ENCODE measurements at regions of chr6 and their contacts with region 1.

Region 1: DNA sequence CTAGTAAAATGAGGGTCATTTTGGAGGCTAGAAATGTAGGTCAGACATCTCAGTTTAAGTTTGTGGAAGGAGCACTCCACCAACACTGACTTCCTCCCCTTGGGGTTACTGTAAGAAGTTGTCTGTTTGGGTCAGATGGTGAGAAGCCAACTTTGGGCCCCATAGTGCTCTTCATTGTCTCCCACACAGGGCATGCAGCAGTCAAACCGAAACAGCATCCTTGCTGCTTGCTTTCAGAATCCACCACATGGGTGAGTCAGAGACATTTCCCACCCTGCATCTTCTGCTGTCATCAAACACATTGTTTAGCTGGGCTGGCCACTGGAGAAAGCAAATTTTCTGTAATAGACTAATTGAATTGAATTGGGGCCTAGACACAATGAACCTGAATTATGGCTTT is 16.8 kb downstream of the IL17F start:
- DNase-seq: peak; percentile 91
- H3K4me3 Mint-ChIP-seq: no peak overlapping the region
- H3K27ac Mint-ChIP-seq: no peak overlapping the region
- H3K4me1 Mint-ChIP-seq: peaks cover 18% of the 10 kb centered on the region
- H3K27me3 Mint-ChIP-seq: peaks cover 24% of the 10 kb centered on the region

Region 2: GRCh38 chr6:52063584-52064344 is 163.7 kb before region 1 on chr6:
- CTCF ChIA-PET with region 1: interaction called, 12 read pairs
- intact Hi-C with region 1: loop called (anchors 2 kb)
- DNase-seq: peak; percentile 76
- H3K4me3 Mint-ChIP-seq: peak overlapping the region; percentile 20
- H3K27ac Mint-ChIP-seq: peak overlapping the region; percentile 72
- H3K4me1 Mint-ChIP-seq: peaks cover 10% of the 10 kb centered on the region
- H3K27me3 Mint-ChIP-seq: no peaks in the 10 kb centered on the region

Region 3: GRCh38 chr6:52157301-52157941 is 70.1 kb before region 1 on chr6:
- CTCF ChIA-PET with region 1: interaction called, 52 read pairs
- intact Hi-C with region 1: loop called (anchors 1 kb)
- DNase-seq: peak; percentile 50
- H3K4me3 Mint-ChIP-seq: no peak overlapping the region
- H3K27ac Mint-ChIP-seq: peak overlapping the region; percentile 74
- H3K4me1 Mint-ChIP-seq: peaks cover 53% of the 10 kb centered on the region
- H3K27me3 Mint-ChIP-seq: peaks cover 22% of the 10 kb centered on the region

Region 4: GRCh38 chr6:52201046-52201445 is 26.4 kb before region 1 on chr6:
- CTCF ChIA-PET with region 1: interaction called, 3 read pairs
- intact Hi-C with region 1: loop called (anchors 1 kb)
- DNase-seq: no peak
- H3K4me3 Mint-ChIP-seq: no peak overlapping the region
- H3K27ac Mint-ChIP-seq: no peak overlapping the region
- H3K4me1 Mint-ChIP-seq: peaks cover 13% of the 10 kb centered on the region
- H3K27me3 Mint-ChIP-seq: peaks cover 15% of the 10 kb centered on the region

Region 5: GRCh38 chr6:52213127-52213526 is 14.4 kb before region 1 on chr6:
- CTCF ChIA-PET with region 1: interaction called, 5 read pairs
- intact Hi-C with region 1: loop called (anchors 1 kb)
- DNase-seq: peak; percentile 68
- H3K4me3 Mint-ChIP-seq: no peak overlapping the region
- H3K27ac Mint-ChIP-seq: no peak overlapping the region
- H3K4me1 Mint-ChIP-seq: peaks cover 11% of the 10 kb centered on the region
- H3K27me3 Mint-ChIP-seq: peaks cover 8% of the 10 kb centered on the region

Region 6: GRCh38 chr6:52254731-52255378 is 27.4 kb after region 1 on chr6:
- CTCF ChIA-PET with region 1: interaction called, 3 read pairs
- intact Hi-C with region 1: loop called (anchors 1 kb)
- DNase-seq: peak; percentile 37
- H3K4me3 Mint-ChIP-seq: no peak overlapping the region
- H3K27ac Mint-ChIP-seq: no peak overlapping the region
- H3K4me1 Mint-ChIP-seq: peaks cover 43% of the 10 kb centered on the region
- H3K27me3 Mint-ChIP-seq: peaks cover 10% of the 10 kb centered on the region

Region 7: GRCh38 chr6:52399511-52400312 is 172.2 kb after region 1 on chr6:
- CTCF ChIA-PET with region 1: interaction called, 3 read pairs
- intact Hi-C with region 1: loop called (anchors 1 kb)
- DNase-seq: peak; percentile 64
- H3K4me3 Mint-ChIP-seq: no peak overlapping the region
- H3K27ac Mint-ChIP-seq: peak overlapping the region; percentile 73
- H3K4me1 Mint-ChIP-seq: peaks cover 72% of the 10 kb centered on the region
- H3K27me3 Mint-ChIP-seq: no peaks in the 10 kb centered on the region